HepG2 (cell line): ENCODE measurements at regions of chr11 and their contacts with region 1.

Region 1: DNA sequence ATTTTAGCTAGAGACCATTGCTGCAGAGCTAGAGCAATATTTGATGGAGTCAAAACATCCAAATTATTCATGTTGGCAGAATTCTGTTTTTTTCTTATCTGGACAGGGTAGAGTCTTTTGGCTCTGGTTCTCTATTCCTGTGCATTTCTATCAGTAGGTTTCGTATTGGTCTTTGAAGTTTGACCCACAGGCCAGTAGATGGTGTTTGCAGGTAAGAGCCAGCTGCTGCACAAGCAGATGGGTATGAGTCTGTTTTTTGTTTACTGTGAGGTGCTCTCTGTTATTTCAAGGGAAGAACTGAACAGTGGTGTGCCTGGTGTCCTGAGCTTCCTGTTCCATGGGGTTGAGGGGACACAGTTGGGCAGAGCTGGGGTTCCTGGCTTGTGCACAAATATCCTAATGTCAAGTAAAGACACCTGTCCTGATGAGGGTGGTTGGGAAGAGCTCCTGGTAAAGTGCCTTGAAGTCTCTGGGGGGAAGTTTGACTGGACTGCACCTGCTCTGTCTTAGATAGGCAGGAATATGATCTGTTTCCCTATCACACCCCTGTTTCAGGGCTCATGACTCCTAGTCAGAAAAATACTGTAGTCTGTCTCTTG is 34.0 kb upstream of the SLC22A25 start:
- DNase-seq: peak; percentile 41
- ATAC-seq: peak; percentile 94
- H3K4me3 ChIP-seq: no peak overlapping the region
- H3K27ac ChIP-seq: no peak overlapping the region
- H3K4me1 ChIP-seq: peaks cover 45% of the 10 kb centered on the region
- H3K27me3 ChIP-seq: no peaks in the 10 kb centered on the region
- CTCF ChIP-seq: peak; percentile 75
- EP300 ChIP-seq: no peak
- POLR2A ChIP-seq: no peak
- RAD21 ChIP-seq: peak; percentile 46; the same call in 1 of the 2 replicates

Region 2: DNA sequence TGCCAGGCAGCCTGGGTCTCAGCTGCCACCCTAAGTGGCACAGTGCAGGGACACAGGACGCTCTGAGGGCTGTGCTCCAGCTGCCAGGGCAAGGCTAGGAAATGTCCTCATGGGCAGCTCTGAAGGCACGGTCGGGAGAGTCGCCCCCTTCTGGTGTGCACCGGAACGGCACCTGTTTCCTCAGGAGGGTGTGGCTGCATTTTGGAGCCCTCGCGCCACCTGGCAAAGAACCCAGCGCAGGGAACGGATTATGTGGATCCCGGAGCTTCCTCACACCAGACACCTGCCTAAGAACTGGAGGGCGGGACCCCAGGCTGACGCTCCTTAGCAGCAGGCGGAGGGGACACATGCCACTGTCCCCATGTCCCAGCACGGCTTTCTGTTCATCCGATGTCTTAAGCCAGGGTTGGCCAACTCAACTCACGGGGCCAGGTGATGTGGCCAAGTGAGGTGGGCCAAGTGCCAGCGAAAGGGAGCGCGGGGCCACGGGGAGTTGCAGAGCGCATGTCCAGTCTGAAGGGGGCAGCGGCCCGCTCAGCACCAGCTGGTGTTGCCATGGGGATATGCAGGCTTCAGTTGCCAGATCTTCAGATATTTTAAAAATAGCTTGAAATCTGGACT is 256.7 kb before region 1 on chr11:
- CTCF ChIA-PET with region 1: no interaction called
- POLR2A ChIA-PET with region 1: no interaction called
- in situ Hi-C with region 1: no loop called
- intact Hi-C with region 1: no loop called
- DNase-seq: no peak
- ATAC-seq: peak; percentile 12; the same call in 1 of the 3 replicates
- H3K4me3 ChIP-seq: no peak overlapping the region
- H3K27ac ChIP-seq: no peak overlapping the region
- H3K4me1 ChIP-seq: peaks cover 10% of the 10 kb centered on the region
- H3K27me3 ChIP-seq: peaks cover 6 to 11% of the 10 kb centered on the region in 2 experiments; a peak in 3 of 5 replicates
- CTCF ChIP-seq: peak; percentile 66
- EP300 ChIP-seq: no peak
- POLR2A ChIP-seq: no peak
- RAD21 ChIP-seq: no peak

Region 3: GRCh38 chr11:63032457-63032856 is 245.0 kb before region 1 on chr11:
- CTCF ChIA-PET with region 1: no interaction called
- POLR2A ChIA-PET with region 1: no interaction called
- in situ Hi-C with region 1: no loop called
- intact Hi-C with region 1: loop called (anchors 1 kb)
- DNase-seq: no peak
- ATAC-seq: no peak
- H3K4me3 ChIP-seq: no peak overlapping the region
- H3K27ac ChIP-seq: no peak overlapping the region
- H3K4me1 ChIP-seq: peaks cover 7% of the 10 kb centered on the region; the same call in 1 of the 2 replicates
- H3K27me3 ChIP-seq: no peaks in the 10 kb centered on the region
- CTCF ChIP-seq: no peak
- EP300 ChIP-seq: no peak
- POLR2A ChIP-seq: no peak
- RAD21 ChIP-seq: no peak

Region 4: DNA sequence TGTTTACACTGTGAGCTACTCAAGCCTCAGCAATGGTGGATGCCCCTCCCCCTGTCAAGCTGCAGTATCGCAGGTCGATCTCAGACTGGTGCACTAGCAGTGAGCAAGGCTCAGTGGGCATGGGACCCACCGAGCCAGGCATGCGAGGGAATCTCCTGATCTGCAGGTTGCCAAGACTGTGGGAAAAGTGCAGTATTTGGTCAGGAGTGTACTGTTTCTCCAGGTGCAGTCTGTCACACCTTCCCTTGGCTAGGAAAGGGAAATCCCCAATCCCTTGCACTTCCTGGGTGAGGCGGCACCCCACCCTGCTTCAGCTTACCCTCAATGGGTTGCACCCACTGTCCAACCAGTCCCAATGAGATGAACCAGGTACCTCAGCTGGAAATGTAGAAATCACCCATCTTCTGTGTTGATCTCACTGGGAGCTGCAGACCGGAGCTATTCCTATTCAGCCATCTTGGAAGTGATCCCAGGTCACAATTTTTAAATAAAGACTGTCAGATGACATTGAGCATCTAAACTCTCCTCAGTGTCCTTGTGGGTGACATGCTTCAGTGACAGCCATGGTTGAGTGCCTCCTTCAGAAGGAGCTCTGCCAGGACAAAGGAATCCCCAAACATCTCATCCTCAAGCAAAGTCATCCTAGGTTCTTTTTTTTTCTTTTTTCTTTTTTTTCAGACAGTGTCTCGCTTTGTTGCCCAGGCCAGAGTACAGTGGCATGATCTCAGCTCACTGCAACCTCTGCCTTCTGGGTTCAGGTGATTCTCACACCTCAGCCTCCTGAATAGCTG is 144.3 kb before region 1 on chr11:
- CTCF ChIA-PET with region 1: interaction called, 14 read pairs
- POLR2A ChIA-PET with region 1: no interaction called
- in situ Hi-C with region 1: loop called (anchors 10 kb)
- intact Hi-C with region 1: loop called (anchors 1 kb)
- DNase-seq: no peak
- ATAC-seq: no peak
- H3K4me3 ChIP-seq: no peak overlapping the region
- H3K27ac ChIP-seq: no peak overlapping the region
- H3K4me1 ChIP-seq: no peaks in the 10 kb centered on the region
- H3K27me3 ChIP-seq: no peaks in the 10 kb centered on the region; a peak in 1 of 5 replicates
- CTCF ChIP-seq: no peak
- EP300 ChIP-seq: no peak
- POLR2A ChIP-seq: no peak
- RAD21 ChIP-seq: no peak

Region 5: GRCh38 chr11:63212742-63213141 is 64.7 kb before region 1 on chr11:
- CTCF ChIA-PET with region 1: interaction called, 6 read pairs
- POLR2A ChIA-PET with region 1: no interaction called
- in situ Hi-C with region 1: no loop called
- intact Hi-C with region 1: loop called (anchors 5 kb)
- DNase-seq: peak; percentile 10
- ATAC-seq: no peak
- H3K4me3 ChIP-seq: no peak overlapping the region
- H3K27ac ChIP-seq: no peak overlapping the region
- H3K4me1 ChIP-seq: peaks cover 22% of the 10 kb centered on the region
- H3K27me3 ChIP-seq: no peaks in the 10 kb centered on the region
- CTCF ChIP-seq: peak; percentile 42
- EP300 ChIP-seq: no peak
- POLR2A ChIP-seq: no peak
- RAD21 ChIP-seq: 0 out of 2 replicates have a peak, but pooled peaks have one; percentile 17

Region 6: DNA sequence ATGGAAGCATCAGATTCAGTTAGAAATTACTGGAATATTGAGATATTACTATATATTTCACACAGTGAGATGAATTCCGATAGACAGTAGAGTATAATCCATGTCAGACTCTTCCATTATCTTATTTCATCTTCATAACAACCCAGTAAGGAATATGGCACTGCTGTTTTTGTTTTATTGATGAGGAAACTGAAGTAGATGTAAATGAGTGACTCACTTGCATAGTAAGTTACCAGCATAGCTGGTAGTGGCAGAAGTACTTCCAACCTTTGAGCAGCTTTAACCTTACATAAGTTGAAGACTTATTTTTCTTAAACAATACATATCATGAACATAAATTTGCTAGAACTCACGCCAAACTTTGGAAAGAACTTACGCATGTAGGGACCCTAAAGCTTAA is 20.8 kb after region 1 on chr11:
- CTCF ChIA-PET with region 1: no interaction called
- POLR2A ChIA-PET with region 1: no interaction called
- in situ Hi-C with region 1: no loop called
- intact Hi-C with region 1: no loop called
- DNase-seq: no peak
- ATAC-seq: no peak
- H3K4me3 ChIP-seq: no peak overlapping the region
- H3K27ac ChIP-seq: no peak overlapping the region
- H3K4me1 ChIP-seq: no peaks in the 10 kb centered on the region
- H3K27me3 ChIP-seq: no peaks in the 10 kb centered on the region
- CTCF ChIP-seq: no peak
- EP300 ChIP-seq: no peak
- POLR2A ChIP-seq: no peak
- RAD21 ChIP-seq: no peak